ENCODE measurements at regions of chr20 and their contacts with region 1.

Region 1: GRCh38 chr20:45880988-45881788 is at the start of gene ZSWIM1:
- DNase-seq: peak; percentile 98 to 99
- H3K4me3 ChIP-seq: peak within 1 kb of the TSS; percentile 67
- H3K27ac ChIP-seq: peak within 1 kb of the TSS; percentile 14; the same call in 1 of the 2 replicates
- H3K4me1 ChIP-seq: peaks cover 31% of the 10 kb centered on the region
- H3K27me3 ChIP-seq: no peaks in the 10 kb centered on the region
- CTCF ChIP-seq: no peak
- total RNA-seq, gene ZSWIM1: 13.2 and 13.5 TPM in 2 replicates

Region 2: GRCh38 chr20:45555198-45555597 is 326.0 kb before region 1 on chr20:
- CTCF ChIA-PET with region 1: no interaction called
- POLR2A ChIA-PET with region 1: no interaction called
- intact Hi-C with region 1: no loop called
- DNase-seq: peak in 1 of 2 experiments; percentile 44
- H3K4me3 ChIP-seq: no peak overlapping the region
- H3K27ac ChIP-seq: no peak overlapping the region
- H3K4me1 ChIP-seq: no peaks in the 10 kb centered on the region
- H3K27me3 ChIP-seq: no peaks in the 10 kb centered on the region
- CTCF ChIP-seq: no peak

Region 3: DNA sequence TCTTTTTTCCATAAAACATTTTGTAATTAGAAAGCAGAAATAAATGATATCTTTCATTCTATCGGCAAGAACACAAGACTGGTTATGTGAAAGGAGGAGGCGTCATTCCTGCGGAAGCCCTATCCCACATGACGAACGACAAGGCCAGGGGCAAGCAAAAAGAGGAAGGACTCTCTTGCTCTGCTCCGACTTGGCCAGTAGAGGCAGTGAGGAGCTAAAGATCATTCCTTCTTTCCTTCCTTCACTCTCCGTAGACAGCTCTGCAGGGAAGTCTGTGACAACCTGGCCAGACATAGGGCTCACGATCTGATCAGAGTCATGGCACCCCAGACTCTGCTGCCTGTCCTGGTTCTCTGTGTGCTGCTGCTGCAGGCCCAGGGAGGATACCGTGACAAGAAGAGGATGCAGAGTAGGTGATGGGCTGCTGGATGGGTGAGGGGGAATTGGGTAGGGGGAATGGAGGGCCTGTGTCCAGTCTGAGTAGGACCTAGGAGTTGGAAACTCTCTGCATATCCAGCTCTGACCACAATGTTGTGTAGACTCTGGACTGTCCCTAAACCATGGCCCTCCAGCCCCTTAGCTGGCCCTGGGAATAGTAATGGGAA is 251.6 kb before region 1 on chr20 and contains the start of gene WFDC10A:
- CTCF ChIA-PET with region 1: no interaction called
- POLR2A ChIA-PET with region 1: interaction called, 13 read pairs
- intact Hi-C with region 1: no loop called
- DNase-seq: peak; percentile 50 to 55
- H3K4me3 ChIP-seq: no peak within 1 kb of the TSS
- H3K27ac ChIP-seq: no peak within 1 kb of the TSS
- H3K4me1 ChIP-seq: no peaks in the 10 kb centered on the region
- H3K27me3 ChIP-seq: peaks cover 7% of the 10 kb centered on the region; the same call in 1 of the 2 replicates
- CTCF ChIP-seq: peak; percentile 84
- total RNA-seq, gene WFDC10A: not detected in 2 replicates

Region 4: GRCh38 chr20:45857114-45857881 is 23.9 kb before region 1 on chr20 and contains the starts of genes ACOT8 and ZSWIM3:
- CTCF ChIA-PET with region 1: no interaction called
- POLR2A ChIA-PET with region 1: interaction called, 8 read pairs
- intact Hi-C with region 1: loop called (anchors 2 kb)
- DNase-seq: peak; percentile 97 to 100
- H3K4me3 ChIP-seq: peak within 1 kb of the TSS; percentile 86
- H3K27ac ChIP-seq: no peak within 1 kb of the TSS
- H3K4me1 ChIP-seq: peaks cover 26% of the 10 kb centered on the region
- H3K27me3 ChIP-seq: no peaks in the 10 kb centered on the region
- CTCF ChIP-seq: no peak
- total RNA-seq, gene ACOT8: 33.4 and 40.0 TPM in 2 replicates
- total RNA-seq, gene ZSWIM3: 2.7 and 3.3 TPM in 2 replicates

Region 5: GRCh38 chr20:45896641-45897161 is 15.5 kb after region 1 on chr20:
- CTCF ChIA-PET with region 1: no interaction called
- POLR2A ChIA-PET with region 1: interaction called, 12 read pairs
- intact Hi-C with region 1: no loop called
- DNase-seq: no peak
- H3K4me3 ChIP-seq: no peak overlapping the region
- H3K27ac ChIP-seq: no peak overlapping the region
- H3K4me1 ChIP-seq: 0 out of 2 replicates have a peak, but pooled peaks cover 4% of the 10 kb centered on the region
- H3K27me3 ChIP-seq: no peaks in the 10 kb centered on the region
- CTCF ChIP-seq: no peak

Measured in PC-9 (cell line).